ENCODE measurements at regions of chr12 and their contacts with region 1.

Region 1: GRCh38 chr12:93943766-93944165 is 204.6 kb upstream of the PLXNC1 start:
- DNase-seq: no peak
- H3K4me3 ChIP-seq: no peak overlapping the region
- H3K27ac ChIP-seq: no peak overlapping the region
- H3K4me1 ChIP-seq: no peaks in the 10 kb centered on the region
- H3K27me3 ChIP-seq: no peaks in the 10 kb centered on the region
- CTCF ChIP-seq: no peak
- POLR2A ChIP-seq: no peak

Region 2: GRCh38 chr12:93484315-93484981 is 459.3 kb before region 1 on chr12:
- intact Hi-C with region 1: loop called (anchors 5 kb)
- DNase-seq: no peak
- H3K4me3 ChIP-seq: no peak overlapping the region
- H3K27ac ChIP-seq: no peak overlapping the region
- H3K4me1 ChIP-seq: no peaks in the 10 kb centered on the region
- H3K27me3 ChIP-seq: no peaks in the 10 kb centered on the region
- CTCF ChIP-seq: no peak
- POLR2A ChIP-seq: no peak

Region 3: GRCh38 chr12:93925585-93926205 is 18.1 kb before region 1 on chr12:
- intact Hi-C with region 1: loop called (anchors 1 kb)
- DNase-seq: no peak
- H3K4me3 ChIP-seq: no peak overlapping the region
- H3K27ac ChIP-seq: no peak overlapping the region
- H3K4me1 ChIP-seq: no peaks in the 10 kb centered on the region
- H3K27me3 ChIP-seq: no peaks in the 10 kb centered on the region
- CTCF ChIP-seq: no peak
- POLR2A ChIP-seq: no peak

Region 4: DNA sequence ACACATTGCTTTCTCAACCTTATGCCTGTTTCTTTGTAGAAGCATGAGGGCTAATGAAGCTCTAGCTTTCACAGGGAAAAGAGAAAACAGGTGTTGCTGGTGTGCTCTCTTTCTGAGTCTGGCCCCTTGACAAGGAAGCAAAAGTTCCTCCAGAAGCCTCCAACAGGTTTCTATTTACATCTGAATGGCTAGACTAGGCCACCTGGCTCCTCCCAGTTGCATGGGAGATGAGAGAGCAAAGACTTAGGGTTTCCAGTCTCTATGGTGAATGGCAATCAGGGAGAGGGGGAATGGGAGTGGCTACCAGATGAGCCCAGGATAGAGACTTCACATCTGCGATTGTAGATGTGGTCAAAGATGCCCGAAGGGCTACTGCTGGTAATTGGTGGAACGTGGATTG is 66.5 kb after region 1 on chr12:
- intact Hi-C with region 1: no loop called
- DNase-seq: no peak
- H3K4me3 ChIP-seq: no peak overlapping the region
- H3K27ac ChIP-seq: no peak overlapping the region
- H3K4me1 ChIP-seq: no peaks in the 10 kb centered on the region
- H3K27me3 ChIP-seq: no peaks in the 10 kb centered on the region
- CTCF ChIP-seq: no peak
- POLR2A ChIP-seq: no peak

Measured in breast epithelium (tissue), 4 donors.